ENCODE measurements at regions of chr5 and their contacts with region 1.

Region 1: DNA sequence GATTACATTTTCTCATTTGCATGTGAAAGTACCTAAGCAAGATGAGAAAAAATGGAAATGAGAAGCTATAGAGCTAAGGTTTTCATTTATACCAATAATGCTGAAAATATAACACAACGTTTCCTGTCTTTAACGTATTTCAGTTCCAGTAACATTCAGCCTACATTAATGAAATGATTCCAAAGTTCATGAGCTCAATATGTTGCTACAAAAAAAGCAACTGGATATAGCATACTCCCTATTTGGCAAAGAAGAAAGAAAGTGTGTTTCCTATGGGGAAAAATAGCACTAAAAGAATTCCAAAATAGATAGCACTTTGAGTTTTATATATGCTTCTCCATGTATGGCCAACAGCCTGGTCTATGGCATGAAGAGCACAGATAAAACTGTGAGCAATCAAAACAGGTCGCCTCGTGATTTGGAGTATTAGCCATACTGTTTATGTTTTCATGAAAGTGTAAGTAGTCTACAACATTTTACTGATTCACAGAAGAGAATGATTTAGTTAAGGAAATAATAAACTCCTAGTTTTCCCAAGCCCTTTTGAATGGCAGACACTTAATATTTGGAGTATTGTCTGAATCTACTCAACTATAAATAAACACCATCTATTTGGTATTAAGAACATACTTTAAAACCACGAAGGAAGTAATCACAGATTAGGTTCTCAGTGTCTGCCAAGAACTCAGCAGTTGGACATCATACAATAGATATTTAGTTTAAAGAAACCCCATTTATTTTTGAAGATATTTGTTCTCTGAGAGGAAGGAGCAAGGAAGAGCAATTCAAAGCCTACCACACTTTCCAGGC is 258.7 kb upstream of the RASA1 start:
- DNase-seq: no peak
- H3K4me3 ChIP-seq: no peak overlapping the region
- H3K27ac ChIP-seq: no peak overlapping the region
- H3K4me1 ChIP-seq: no peaks in the 10 kb centered on the region
- H3K27me3 ChIP-seq: peaks cover 0 to 2% (median 0%) of the 10 kb centered on the region in 5 experiments

Region 2: GRCh38 chr5:87020099-87020934 is 11.4 kb after region 1 on chr5:
- CTCF ChIA-PET with region 1: no interaction called
- POLR2A ChIA-PET with region 1: no interaction called
- DNase-seq: peak in 2 of 3 donors; percentile 38 to 53
- H3K4me3 ChIP-seq: no peak overlapping the region
- H3K27ac ChIP-seq: no peak overlapping the region
- H3K4me1 ChIP-seq: peaks cover 0 to 22% (median 6%) of the 10 kb centered on the region in 4 experiments
- H3K27me3 ChIP-seq: no peaks in the 10 kb centered on the region

Region 3: DNA sequence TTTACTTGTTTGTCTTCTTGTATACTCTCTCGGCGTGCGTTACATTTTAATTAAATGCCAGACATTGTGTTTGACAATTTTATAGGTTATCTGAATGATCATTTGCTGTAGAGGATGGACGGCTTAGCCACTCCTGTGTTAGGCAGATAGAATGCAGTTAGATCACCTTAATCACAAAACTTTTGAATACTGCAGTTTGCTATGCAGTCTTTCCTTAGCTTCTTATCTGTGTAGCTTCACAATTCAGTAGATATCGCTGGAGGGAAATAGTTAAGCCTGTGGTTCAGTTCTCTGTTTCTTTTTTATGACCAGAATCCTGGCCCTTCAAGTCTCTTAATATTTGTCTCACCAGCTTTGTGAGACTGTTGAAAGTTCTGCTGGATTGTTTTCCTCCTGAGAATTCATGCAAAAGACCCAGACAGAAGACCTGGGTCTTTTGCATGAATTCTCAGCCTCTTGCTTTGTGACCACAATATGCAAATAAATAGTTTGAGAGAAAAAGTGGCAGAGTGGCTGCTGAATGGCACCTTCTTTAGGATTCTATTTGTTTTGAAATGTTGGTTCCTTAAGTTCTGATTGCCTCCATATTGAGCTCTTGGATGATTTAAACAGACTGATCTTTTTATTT is 299.0 kb after region 1 on chr5:
- CTCF ChIA-PET with region 1: no interaction called
- POLR2A ChIA-PET with region 1: interaction called, 11 read pairs
- DNase-seq: no peak
- H3K4me3 ChIP-seq: no peak overlapping the region
- H3K27ac ChIP-seq: no peak overlapping the region
- H3K4me1 ChIP-seq: peaks cover 0 to 2% (median 0%) of the 10 kb centered on the region in 4 experiments
- H3K27me3 ChIP-seq: no peaks in the 10 kb centered on the region

Region 4: DNA sequence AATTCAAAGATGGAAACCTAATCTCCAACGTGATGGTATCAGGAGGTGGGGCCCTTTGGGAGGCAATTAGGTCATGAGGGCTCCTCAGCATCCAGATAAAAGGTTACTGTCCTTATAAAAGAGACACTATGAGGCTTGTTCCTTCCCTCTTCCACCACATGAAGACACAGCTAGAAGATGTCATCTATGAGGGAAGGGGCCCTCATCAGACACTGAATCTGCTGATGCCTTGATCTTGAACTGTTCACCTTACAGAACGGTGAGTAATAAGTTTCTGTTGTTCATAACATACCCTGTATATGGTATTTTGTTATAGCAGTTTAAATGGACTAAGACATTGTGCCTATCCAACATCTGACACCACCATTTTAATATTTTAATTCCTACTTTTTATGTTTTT is 423.5 kb after region 1 on chr5:
- CTCF ChIA-PET with region 1: no interaction called
- POLR2A ChIA-PET with region 1: no interaction called
- DNase-seq: no peak
- H3K4me3 ChIP-seq: no peak overlapping the region
- H3K27ac ChIP-seq: no peak overlapping the region
- H3K4me1 ChIP-seq: no peaks in the 10 kb centered on the region
- H3K27me3 ChIP-seq: peaks cover 0 to 4% (median 0%) of the 10 kb centered on the region in 5 experiments